Heart left ventricle (tissue), 16 donors: ENCODE measurements at regions of chr7 and their contacts with region 1.

Region 1: DNA sequence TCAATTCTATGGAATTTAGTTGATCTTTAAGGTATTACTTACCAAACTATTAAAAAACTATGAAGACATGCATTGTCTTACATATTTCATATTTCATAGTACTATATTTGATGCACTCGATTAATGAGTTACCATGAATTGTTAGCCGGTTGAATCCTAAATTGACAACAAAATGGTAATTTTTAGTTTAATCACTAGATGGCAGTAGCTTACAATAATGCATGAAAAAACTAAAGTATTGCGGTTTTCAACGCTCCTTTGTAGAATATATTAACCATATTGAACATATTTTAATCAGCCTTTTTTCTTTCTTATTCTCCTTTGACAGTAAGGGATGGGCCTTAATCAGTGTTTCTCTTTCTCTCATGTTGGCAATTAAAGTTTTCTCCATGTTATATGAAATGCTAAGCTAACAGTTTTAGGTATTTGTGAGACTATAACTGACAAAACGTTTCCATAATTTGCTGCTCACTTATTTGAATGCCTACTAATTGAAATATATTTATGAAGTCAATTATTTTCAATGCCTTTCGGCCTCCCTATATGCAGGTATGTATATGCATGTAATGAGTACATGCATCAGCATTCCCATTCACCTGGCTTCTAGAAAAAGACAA is 48.5 kb upstream of the ARL4A start:
- DNase-seq: no peak
- ATAC-seq: peak in 2 of 4 donors; percentile 36 to 67
- H3K4me3 ChIP-seq: no peak overlapping the region
- H3K27ac ChIP-seq: no peak overlapping the region
- H3K4me1 ChIP-seq: peaks cover 0 to 14% (median 0%) of the 10 kb centered on the region in 12 donors
- H3K27me3 ChIP-seq: peaks cover 0 to 5% (median 0%) of the 10 kb centered on the region in 9 donors
- CTCF ChIP-seq: peak; percentile 55 to 86 (median 68)
- POLR2A ChIP-seq: no peak

Region 2: DNA sequence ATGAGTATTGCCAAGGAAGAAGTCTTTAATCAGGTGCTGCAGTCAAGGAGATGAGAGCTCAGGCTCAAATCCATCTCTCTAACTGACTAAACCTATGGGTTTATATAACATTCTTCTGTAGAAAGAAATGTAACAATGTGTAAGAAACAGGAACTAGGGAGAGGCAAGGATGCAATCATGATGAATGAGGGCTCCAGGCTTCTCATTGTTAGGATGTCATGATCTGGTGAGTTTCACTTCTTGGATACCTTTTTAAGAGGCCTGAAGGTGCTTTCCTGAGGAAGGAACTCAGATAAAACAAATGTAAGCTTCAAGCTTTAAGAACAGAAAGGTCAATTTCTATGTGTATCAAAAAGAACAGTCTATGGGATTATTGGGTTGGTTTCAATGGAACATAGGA is 99.3 kb before region 1 on chr7:
- intact Hi-C with region 1: loop called in 1 of 10 experiments (anchors 10 kb)
- DNase-seq: no peak
- ATAC-seq: no peak
- H3K4me3 ChIP-seq: no peak overlapping the region
- H3K27ac ChIP-seq: no peak overlapping the region
- H3K4me1 ChIP-seq: no peaks in the 10 kb centered on the region
- H3K27me3 ChIP-seq: no peaks in the 10 kb centered on the region
- CTCF ChIP-seq: no peak
- POLR2A ChIP-seq: no peak

Region 3: DNA sequence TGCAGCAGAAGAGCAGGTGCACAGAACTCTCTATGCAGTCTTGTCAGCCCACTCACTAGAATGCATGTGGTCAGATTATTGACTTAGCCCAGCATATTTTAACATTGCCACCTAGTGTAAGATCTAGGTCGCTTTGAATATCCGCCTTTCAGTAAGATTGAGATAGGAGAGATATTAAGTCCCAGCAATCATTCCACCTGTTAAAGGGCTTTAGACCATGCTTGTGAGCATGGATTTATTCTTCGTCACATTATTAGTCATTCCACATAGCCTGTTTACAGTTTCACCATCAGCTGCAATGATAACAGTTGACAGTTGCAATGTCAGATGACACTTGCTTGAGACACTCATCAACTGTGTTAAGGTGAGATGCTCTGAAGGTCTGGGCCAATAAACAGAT is 540.1 kb after region 1 on chr7:
- intact Hi-C with region 1: loop called in 4 of 10 experiments (anchors 5 to 10 kb)
- DNase-seq: no peak
- ATAC-seq: peak in 3 of 4 donors; percentile 45 to 66 (median 57)
- H3K4me3 ChIP-seq: no peak overlapping the region
- H3K27ac ChIP-seq: no peak overlapping the region
- H3K4me1 ChIP-seq: peaks cover 0 to 9% (median 0%) of the 10 kb centered on the region in 12 donors
- H3K27me3 ChIP-seq: no peaks in the 10 kb centered on the region
- CTCF ChIP-seq: peak in 9 of 12 donors; percentile 9 to 52 (median 39)
- POLR2A ChIP-seq: no peak

Region 4: GRCh38 chr7:13262929-13263530 is 624.1 kb after region 1 on chr7:
- intact Hi-C with region 1: loop called (anchors 1 to 5 kb)
- DNase-seq: no peak
- ATAC-seq: peak in 1 of 4 donors; percentile 63
- H3K4me3 ChIP-seq: no peak overlapping the region
- H3K27ac ChIP-seq: no peak overlapping the region
- H3K4me1 ChIP-seq: no peaks in the 10 kb centered on the region
- H3K27me3 ChIP-seq: no peaks in the 10 kb centered on the region
- CTCF ChIP-seq: peak; percentile 41 to 81 (median 62)
- POLR2A ChIP-seq: no peak